ENCODE measurements at regions of chr3 and their contacts with region 1.

Region 1: DNA sequence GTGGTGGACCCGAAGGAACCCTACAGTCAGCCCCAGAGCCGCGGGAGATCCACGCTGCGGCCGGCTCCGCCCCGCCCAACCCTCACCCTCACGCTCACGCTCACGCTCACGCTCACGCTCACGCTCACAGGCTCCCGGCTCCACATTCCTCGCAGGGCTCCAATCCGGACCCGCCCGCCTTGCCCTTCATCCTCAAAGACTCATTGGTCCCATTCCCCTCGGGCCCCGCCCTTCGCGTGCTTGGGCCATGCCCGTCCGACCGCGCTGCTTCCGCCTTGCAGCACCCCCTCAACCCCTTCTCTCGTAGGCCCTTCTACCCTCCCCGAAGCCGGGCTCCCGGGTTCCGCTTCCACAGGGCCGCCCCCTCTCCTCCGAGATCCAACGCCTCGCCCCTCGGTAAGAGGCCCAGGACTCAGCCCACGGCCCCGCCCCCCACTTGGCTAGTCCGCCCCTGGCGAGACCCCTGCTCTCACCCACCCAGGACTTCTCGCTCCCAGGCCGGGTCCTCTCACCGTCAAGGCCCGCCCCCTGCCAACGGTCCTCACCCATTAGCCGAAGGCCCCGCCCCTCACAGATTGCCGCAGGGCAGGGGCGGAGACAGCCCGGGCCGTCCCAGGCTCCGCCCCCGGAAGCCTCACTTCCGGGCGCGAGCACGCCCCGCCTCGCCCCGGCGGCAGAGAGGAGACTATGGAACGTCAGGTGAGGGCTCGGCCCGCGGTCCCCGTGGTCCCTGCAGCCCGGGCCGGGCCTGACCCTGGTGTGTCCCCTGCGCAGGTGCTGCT is at the start of gene APEH:
- DNase-seq: peak; percentile 98
- ATAC-seq: peak; percentile 81
- H3K4me3 ChIP-seq: peak within 1 kb of the TSS; percentile 88
- H3K27ac ChIP-seq: peak within 1 kb of the TSS; percentile 89
- H3K4me1 ChIP-seq: peaks cover 26% of the 10 kb centered on the region
- H3K27me3 ChIP-seq: no peaks in the 10 kb centered on the region
- CTCF ChIP-seq: no peak
- total RNA-seq, gene APEH: 236 and 246 TPM in 2 replicates

Region 2: DNA sequence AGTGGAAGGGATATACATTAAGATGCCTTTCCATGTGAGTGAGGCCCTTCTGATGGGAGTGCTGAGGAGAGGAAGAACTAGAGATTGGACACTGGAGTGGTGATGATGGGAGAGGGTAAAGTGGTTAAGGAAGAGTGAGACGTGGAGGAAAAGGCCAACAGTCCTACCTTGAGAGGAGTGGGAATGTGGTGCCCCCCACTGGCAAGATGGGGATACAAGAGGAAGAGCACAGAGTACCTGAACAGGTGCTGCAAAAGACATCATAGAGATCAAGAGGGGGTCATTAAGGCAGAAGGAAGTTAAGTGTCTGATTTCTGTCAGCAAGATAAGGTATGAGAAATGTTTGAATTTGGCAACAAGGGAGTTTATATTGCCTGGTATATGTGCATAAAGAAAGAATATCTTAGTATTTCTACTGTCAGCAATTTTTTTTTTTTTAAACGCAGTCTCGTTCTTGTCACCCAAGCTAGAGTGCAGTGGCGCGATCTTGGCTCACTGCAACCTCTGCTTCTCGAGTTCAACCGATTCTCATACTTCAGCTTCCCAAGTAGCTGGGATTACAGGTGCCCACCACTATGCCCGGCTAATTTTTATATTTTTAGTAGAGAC is 721.3 kb before region 1 on chr3:
- CTCF ChIA-PET with region 1: no interaction called
- POLR2A ChIA-PET with region 1: interaction called, 13 read pairs
- intact Hi-C with region 1: no loop called
- DNase-seq: peak; percentile 59
- ATAC-seq: peak; percentile 89
- H3K4me3 ChIP-seq: no peak overlapping the region
- H3K27ac ChIP-seq: no peak overlapping the region
- H3K4me1 ChIP-seq: no peaks in the 10 kb centered on the region
- H3K27me3 ChIP-seq: no peaks in the 10 kb centered on the region
- CTCF ChIP-seq: peak; percentile 84

Region 3: GRCh38 chr3:49593041-49593440 is 80.9 kb before region 1 on chr3:
- CTCF ChIA-PET with region 1: no interaction called
- POLR2A ChIA-PET with region 1: interaction called, 8 read pairs
- intact Hi-C with region 1: loop called (anchors 1 kb)
- DNase-seq: peak; percentile 80
- ATAC-seq: peak; percentile 97
- H3K4me3 ChIP-seq: no peak overlapping the region
- H3K27ac ChIP-seq: peak overlapping the region; percentile 27
- H3K4me1 ChIP-seq: peaks cover 10% of the 10 kb centered on the region; the same call in 1 of the 2 replicates
- H3K27me3 ChIP-seq: no peaks in the 10 kb centered on the region
- CTCF ChIP-seq: no peak

Region 4: GRCh38 chr3:49638445-49638844 is 35.5 kb before region 1 on chr3:
- CTCF ChIA-PET with region 1: interaction called, 3 read pairs
- POLR2A ChIA-PET with region 1: no interaction called
- intact Hi-C with region 1: loop called (anchors 1 kb)
- DNase-seq: peak; percentile 78
- ATAC-seq: peak; percentile 98
- H3K4me3 ChIP-seq: no peak overlapping the region
- H3K27ac ChIP-seq: no peak overlapping the region
- H3K4me1 ChIP-seq: peaks cover 8% of the 10 kb centered on the region
- H3K27me3 ChIP-seq: no peaks in the 10 kb centered on the region
- CTCF ChIP-seq: no peak